Common myeloid progenitor, CD34-positive (primary cell): ENCODE measurements at regions of chr1 and their contacts with region 1.

Region 1: GRCh38 chr1:59061876-59062275 is 235.0 kb upstream of the FGGY start:
- DNase-seq: peak; percentile 42 to 82 (median 73)
- H3K4me3 ChIP-seq: peak overlapping the region in 1 of 7 experiments; percentile 48
- H3K27ac ChIP-seq: no peak overlapping the region
- H3K4me1 ChIP-seq: peaks cover 0 to 30% (median 12%) of the 10 kb centered on the region in 4 experiments
- H3K27me3 ChIP-seq: no peaks in the 10 kb centered on the region

Region 2: DNA sequence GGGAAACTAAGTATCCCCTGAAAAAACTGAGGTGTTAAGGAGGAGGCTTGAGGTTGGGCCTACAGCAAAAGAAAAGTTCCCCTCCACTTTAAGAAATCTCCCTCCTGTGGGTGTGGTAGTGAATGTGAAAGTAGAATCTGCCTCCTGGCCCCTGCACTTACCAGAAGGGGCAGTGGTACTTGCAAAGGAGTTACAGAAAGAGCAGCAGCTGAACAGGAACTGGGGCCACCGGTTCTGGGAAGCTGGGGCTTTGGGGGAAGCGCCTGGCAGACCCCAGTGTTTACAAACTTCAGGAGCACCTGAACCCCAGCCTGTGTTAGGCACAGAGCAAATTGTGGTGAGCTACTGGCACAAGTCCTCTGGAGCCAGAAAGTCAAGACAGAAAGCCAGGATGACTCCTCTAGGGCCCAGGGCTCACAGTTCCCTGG is 15.1 kb before region 1 on chr1:
- CTCF ChIA-PET with region 1: interaction called, 13 read pairs
- POLR2A ChIA-PET with region 1: no interaction called
- DNase-seq: peak; percentile 52 to 85 (median 85)
- H3K4me3 ChIP-seq: peak overlapping the region in 2 of 7 experiments; percentile 19 to 31
- H3K27ac ChIP-seq: peak overlapping the region in 1 of 2 experiments; percentile 57
- H3K4me1 ChIP-seq: peaks cover 4 to 50% (median 28%) of the 10 kb centered on the region in 4 experiments
- H3K27me3 ChIP-seq: no peaks in the 10 kb centered on the region

Region 3: DNA sequence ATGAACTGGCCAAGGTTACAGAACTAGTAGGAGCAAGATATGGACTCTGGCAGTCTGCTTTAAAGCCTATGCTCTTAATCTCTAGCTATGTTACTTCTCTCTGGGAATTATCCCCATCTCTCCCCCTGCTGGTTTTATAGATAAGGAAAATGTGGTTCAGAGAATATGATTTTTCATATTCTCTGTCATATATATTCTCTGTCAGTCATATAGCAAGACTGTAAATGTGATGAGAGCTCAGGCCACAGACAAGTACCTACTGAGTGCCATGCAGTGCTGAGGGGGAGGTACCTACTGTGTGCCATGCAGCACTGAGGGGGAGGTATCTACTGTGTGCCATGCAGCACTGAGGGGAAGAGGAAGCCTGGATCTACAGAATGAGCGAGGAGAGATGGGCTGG is 14.7 kb after region 1 on chr1:
- CTCF ChIA-PET with region 1: interaction called, 12 read pairs
- POLR2A ChIA-PET with region 1: no interaction called
- DNase-seq: peak; percentile 32 to 52 (median 45)
- H3K4me3 ChIP-seq: no peak overlapping the region
- H3K27ac ChIP-seq: no peak overlapping the region
- H3K4me1 ChIP-seq: peaks cover 8 to 40% (median 20%) of the 10 kb centered on the region in 4 experiments
- H3K27me3 ChIP-seq: no peaks in the 10 kb centered on the region